ENCODE measurements at regions of chr5 and their contacts with region 1.

Region 1: GRCh38 chr5:151252762-151253604 is at the start of gene GM2A:
- DNase-seq: peak; percentile 98
- ATAC-seq: peak; percentile 81
- H3K4me3 ChIP-seq: peak within 1 kb of the TSS; percentile 98
- H3K27ac ChIP-seq: peak within 1 kb of the TSS; percentile 69
- H3K4me1 ChIP-seq: peaks cover 25% of the 10 kb centered on the region
- H3K27me3 ChIP-seq: no peaks in the 10 kb centered on the region
- CTCF ChIP-seq: no peak
- EP300 ChIP-seq: no peak
- POLR2A ChIP-seq: peak; percentile 94
- RAD21 ChIP-seq: no peak
- polyA plus RNA-seq, gene GM2A: 33.6 to 44.4 TPM

Region 2: GRCh38 chr5:150778517-150779396 is 474.2 kb before region 1 on chr5 and contains the start of gene SMIM3:
- CTCF ChIA-PET with region 1: no interaction called
- POLR2A ChIA-PET with region 1: no interaction called
- RAD21 ChIA-PET with region 1: no interaction called
- SMC1A ChIA-PET with region 1: no interaction called
- in situ Hi-C with region 1: no loop called
- intact Hi-C with region 1: loop called (anchors 10 kb)
- DNase-seq: no peak
- ATAC-seq: peak; percentile 70
- H3K4me3 ChIP-seq: peak within 1 kb of the TSS; percentile 77
- H3K27ac ChIP-seq: peak within 1 kb of the TSS; percentile 78
- H3K4me1 ChIP-seq: peaks cover 30% of the 10 kb centered on the region
- H3K27me3 ChIP-seq: no peaks in the 10 kb centered on the region
- CTCF ChIP-seq: peak; percentile 45 to 75 (median 68)
- EP300 ChIP-seq: no peak
- POLR2A ChIP-seq: peak; percentile 58; the same call in 1 of the 2 replicates
- RAD21 ChIP-seq: peak; percentile 65
- polyA plus RNA-seq, gene SMIM3: 1.4 to 5.2 TPM

Region 3: DNA sequence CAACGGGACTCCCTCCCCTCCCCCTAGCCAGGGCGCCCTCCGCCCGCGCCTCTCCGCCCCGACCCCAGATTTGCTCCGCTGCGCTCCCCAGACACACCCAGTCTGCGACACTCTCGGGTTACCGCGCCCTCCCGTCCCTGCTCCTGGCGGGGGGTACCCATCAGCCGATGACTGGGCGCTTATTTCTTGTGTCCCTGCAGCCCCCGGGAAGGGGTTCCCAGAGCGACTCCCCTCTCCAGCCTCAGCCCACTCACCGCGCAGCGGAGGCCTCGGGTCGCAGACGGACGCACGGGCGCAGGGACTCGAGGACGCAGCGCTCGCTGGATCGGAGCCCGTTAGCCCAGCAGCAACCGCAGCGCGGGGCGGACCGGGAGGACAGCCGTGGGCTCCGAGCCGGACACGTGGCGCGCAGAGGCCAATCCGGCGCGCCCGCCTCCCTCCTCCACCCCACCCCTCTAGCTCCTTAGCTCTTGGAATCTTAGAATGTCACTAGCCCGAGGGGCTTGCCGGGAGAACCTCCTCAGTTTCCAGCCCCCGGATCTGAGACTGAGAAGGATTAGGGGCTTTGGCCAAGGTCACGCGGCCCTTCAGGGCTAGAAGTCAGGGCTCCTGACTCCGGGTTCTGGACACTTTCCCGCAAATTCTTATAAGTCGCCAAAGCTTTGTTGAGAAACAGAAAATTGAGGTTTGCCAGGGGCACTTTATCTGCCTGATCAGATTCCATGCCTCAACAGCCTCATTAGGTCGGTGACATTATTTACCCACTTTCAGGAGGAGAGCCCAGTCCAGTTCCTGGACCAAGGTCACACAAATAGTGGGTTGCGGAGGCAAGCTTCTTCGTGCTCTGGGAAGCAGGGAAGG is 95.3 kb before region 1 on chr5 and contains the start of gene ANXA6:
- CTCF ChIA-PET with region 1: interaction called, 3 read pairs
- POLR2A ChIA-PET with region 1: interaction called, 12 read pairs
- RAD21 ChIA-PET with region 1: interaction called, 7 read pairs
- SMC1A ChIA-PET with region 1: interaction called, 4 read pairs
- in situ Hi-C with region 1: no loop called
- intact Hi-C with region 1: loop called (anchors 5 kb)
- DNase-seq: no peak
- ATAC-seq: peak; percentile 77
- H3K4me3 ChIP-seq: peak within 1 kb of the TSS; percentile 97
- H3K27ac ChIP-seq: peak within 1 kb of the TSS; percentile 89
- H3K4me1 ChIP-seq: peaks cover 26% of the 10 kb centered on the region
- H3K27me3 ChIP-seq: no peaks in the 10 kb centered on the region
- CTCF ChIP-seq: no peak
- EP300 ChIP-seq: no peak
- POLR2A ChIP-seq: peak; percentile 81
- RAD21 ChIP-seq: no peak
- polyA plus RNA-seq, gene ANXA6: 44.0 to 73.1 TPM

Region 4: GRCh38 chr5:151223469-151224264 is 29.3 kb before region 1 on chr5 and contains the start of gene CCDC69:
- CTCF ChIA-PET with region 1: interaction called, 24 read pairs
- POLR2A ChIA-PET with region 1: interaction called, 90 read pairs
- RAD21 ChIA-PET with region 1: interaction called, 95 read pairs
- SMC1A ChIA-PET with region 1: interaction called, 227 read pairs
- in situ Hi-C with region 1: no loop called
- intact Hi-C with region 1: loop called (anchors 2 kb)
- DNase-seq: no peak
- ATAC-seq: peak; percentile 82
- H3K4me3 ChIP-seq: peak within 1 kb of the TSS; percentile 97
- H3K27ac ChIP-seq: peak within 1 kb of the TSS; percentile 89
- H3K4me1 ChIP-seq: peaks cover 24% of the 10 kb centered on the region
- H3K27me3 ChIP-seq: no peaks in the 10 kb centered on the region
- CTCF ChIP-seq: no peak
- EP300 ChIP-seq: no peak
- POLR2A ChIP-seq: peak; percentile 80
- RAD21 ChIP-seq: 0 out of 2 replicates have a peak, but pooled peaks have one; percentile 16
- polyA plus RNA-seq, gene CCDC69: 13.5 to 21.4 TPM

Region 5: DNA sequence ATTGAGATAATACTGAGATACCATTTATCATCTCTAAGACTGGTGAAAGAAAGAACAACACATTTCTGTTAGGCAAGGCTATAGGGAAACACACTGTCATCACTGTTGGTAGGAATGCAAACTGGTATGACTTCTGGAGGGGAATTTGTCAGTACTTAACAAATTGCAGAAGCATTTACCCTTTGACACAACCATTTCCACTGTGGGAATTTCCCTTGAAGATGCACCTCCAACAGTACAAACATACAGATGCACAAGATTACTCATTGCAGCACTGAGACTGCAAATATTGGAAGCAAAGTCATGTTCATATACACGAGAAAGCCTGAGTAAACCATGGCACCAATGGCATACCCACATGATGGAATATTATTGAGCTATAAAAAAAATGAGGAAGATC is 17.6 kb after region 1 on chr5:
- CTCF ChIA-PET with region 1: interaction called, 3 read pairs
- POLR2A ChIA-PET with region 1: interaction called, 8 read pairs
- RAD21 ChIA-PET with region 1: interaction called, 3 read pairs
- SMC1A ChIA-PET with region 1: interaction called, 14 read pairs
- in situ Hi-C with region 1: no loop called
- intact Hi-C with region 1: no loop called
- DNase-seq: peak; percentile 71
- ATAC-seq: peak; percentile 97
- H3K4me3 ChIP-seq: no peak overlapping the region
- H3K27ac ChIP-seq: no peak overlapping the region
- H3K4me1 ChIP-seq: peaks cover 3% of the 10 kb centered on the region
- H3K27me3 ChIP-seq: no peaks in the 10 kb centered on the region
- CTCF ChIP-seq: no peak
- EP300 ChIP-seq: no peak; a peak in 1 of 4 replicates
- POLR2A ChIP-seq: no peak
- RAD21 ChIP-seq: no peak

Region 6: DNA sequence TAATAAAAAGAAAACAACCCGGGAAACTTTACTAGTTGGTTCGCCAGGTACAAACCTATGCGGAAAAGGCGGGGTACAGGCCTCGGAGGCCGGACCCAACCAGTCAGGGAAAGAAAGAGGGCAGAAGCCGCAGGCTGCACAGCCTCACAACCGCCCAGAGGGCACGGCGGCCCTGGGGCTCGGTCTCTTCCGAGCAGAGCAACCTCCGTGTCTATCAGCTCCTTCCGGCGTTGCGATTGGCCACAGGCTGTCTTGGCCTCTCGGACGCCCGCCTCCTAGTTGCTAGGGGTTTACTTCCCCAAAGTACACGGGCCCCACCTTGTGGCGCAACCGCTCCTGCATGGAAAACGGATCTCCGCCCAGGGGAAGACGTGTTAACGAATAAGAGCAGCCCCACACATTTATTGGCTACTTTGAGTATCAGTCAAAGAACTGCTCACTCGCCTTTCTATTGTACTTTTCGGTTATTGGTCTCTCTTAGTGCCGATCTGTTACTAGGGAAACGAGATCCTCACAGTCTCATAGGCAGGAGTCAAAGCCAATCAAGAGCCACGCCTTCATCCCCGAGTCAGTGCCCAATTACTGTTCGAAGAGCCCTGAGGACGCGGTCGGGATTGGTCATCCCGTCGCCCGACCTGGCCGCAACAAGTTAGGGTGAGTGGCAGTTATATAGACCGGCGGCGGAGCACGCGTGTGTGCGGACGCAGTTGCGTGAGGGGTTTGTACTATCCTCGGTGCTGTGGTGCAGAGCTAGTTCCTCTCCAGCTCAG is 518.5 kb after region 1 on chr5 and contains the start of gene G3BP1:
- CTCF ChIA-PET with region 1: no interaction called
- POLR2A ChIA-PET with region 1: no interaction called
- RAD21 ChIA-PET with region 1: no interaction called
- SMC1A ChIA-PET with region 1: interaction called, 3 read pairs
- in situ Hi-C with region 1: no loop called
- intact Hi-C with region 1: loop called (anchors 5 kb)
- DNase-seq: peak; percentile 100
- ATAC-seq: peak; percentile 87
- H3K4me3 ChIP-seq: peak within 1 kb of the TSS; percentile 97
- H3K27ac ChIP-seq: peak within 1 kb of the TSS; percentile 98
- H3K4me1 ChIP-seq: peaks cover 10% of the 10 kb centered on the region
- H3K27me3 ChIP-seq: no peaks in the 10 kb centered on the region
- CTCF ChIP-seq: peak; percentile 64 to 99 (median 71); a peak in 4 of 6 replicates
- EP300 ChIP-seq: no peak
- POLR2A ChIP-seq: peak; percentile 18
- RAD21 ChIP-seq: peak; percentile 67
- polyA plus RNA-seq, gene G3BP1: 49.7 to 52.7 TPM

Measured in GM12878 (cell line).